Posterior cingulate gyrus (tissue), 11 donors: ENCODE measurements at regions of chr11 and their contacts with region 1.

Region 1: DNA sequence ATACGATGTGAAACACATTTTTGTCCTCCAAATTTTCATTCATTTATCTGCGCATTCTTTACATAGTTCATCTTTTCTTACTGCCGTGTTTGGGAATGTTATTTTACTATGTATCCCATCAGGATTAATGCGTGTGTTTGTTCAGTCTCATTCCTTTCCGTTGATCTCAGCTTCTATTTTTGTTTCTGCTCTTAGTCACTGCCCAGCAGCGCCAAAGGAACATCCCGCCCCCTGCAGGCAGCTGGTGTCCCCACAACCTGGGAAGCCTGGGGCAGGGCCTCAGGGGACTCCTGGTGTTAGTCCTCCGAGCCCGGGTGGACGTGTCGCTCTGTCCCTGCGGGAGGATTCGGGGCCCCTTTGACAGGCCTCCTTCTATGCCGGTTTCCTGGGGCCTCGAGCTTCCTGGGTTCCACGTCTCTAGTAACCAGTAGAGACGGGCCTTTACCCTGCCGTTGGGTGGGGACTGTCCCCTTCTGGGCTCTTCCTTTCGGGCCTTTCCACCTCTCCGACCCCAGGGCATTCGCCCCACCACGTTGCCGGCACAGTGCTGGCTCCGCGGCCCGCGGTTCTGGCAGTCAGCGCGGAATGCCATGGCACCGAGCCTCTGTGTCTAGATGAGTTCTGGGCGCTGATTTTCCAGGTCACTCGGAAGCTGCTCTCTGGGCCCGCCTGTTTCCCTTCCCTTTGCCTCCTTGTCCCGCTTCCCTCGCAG is 39.8 kb downstream of the WEE1 start:
- DNase-seq: peak; percentile 83 to 98 (median 94)

Region 2: GRCh38 chr11:9534791-9535781 is 78.2 kb before region 1 on chr11:
- intact Hi-C with region 1: loop called (anchors 2 kb)
- DNase-seq: peak in 8 of 10 donors; percentile 30 to 92 (median 50)

Region 3: GRCh38 chr11:9575260-9576240 is 37.7 kb before region 1 on chr11:
- intact Hi-C with region 1: loop called (anchors 2 kb)
- DNase-seq: no peak